ENCODE measurements at regions of chr18 and their contacts with region 1.

Region 1: DNA sequence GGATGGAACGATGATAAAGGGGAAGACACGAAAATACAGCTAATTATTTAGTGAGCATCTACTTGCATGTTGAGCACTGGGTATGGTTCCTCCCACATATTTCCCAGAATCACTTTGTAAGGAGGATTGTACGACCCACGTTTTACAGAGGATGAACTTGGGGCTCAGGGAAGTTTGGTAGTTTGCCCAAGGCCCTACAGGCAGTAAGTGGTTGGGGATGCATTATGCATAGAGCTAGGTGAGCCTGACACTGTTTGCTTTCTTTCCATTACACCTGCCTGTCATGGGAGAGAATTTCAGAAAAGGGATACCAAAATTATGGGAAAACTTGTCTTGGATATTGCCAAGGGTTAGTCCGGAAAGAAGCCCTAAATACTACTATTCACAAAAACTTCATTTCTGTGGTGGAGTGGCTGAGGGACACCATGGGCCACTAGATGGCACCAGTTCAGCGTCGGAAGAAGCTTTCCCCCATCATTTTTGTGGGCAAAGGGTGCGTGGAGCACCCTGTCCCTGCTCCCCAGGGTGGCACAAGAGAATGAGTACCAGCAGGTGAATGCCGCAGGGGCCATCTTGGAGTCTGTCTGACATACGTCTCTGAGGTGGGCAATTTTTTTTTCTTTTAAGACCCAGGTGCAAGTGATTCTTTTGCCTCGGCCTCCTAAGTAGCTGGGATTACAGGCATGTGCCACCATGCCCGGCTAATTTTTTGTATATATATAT is 23.5 kb upstream of the C18orf32 start:
- DNase-seq: no peak
- H3K4me3 ChIP-seq: no peak overlapping the region
- H3K27ac ChIP-seq: no peak overlapping the region
- H3K4me1 ChIP-seq: no peaks in the 10 kb centered on the region
- H3K27me3 ChIP-seq: peaks cover 33% of the 10 kb centered on the region
- CTCF ChIP-seq: peak; percentile 87

Region 2: GRCh38 chr18:49206717-49207116 is 303.8 kb before region 1 on chr18:
- intact Hi-C with region 1: no loop called
- DNase-seq: no peak
- H3K4me3 ChIP-seq: no peak overlapping the region
- H3K27ac ChIP-seq: no peak overlapping the region
- H3K4me1 ChIP-seq: peaks cover 11% of the 10 kb centered on the region
- H3K27me3 ChIP-seq: no peaks in the 10 kb centered on the region
- CTCF ChIP-seq: no peak

Region 3: GRCh38 chr18:49447810-49448745 is 62.5 kb before region 1 on chr18:
- intact Hi-C with region 1: no loop called
- DNase-seq: no peak
- H3K4me3 ChIP-seq: no peak overlapping the region
- H3K27ac ChIP-seq: no peak overlapping the region
- H3K4me1 ChIP-seq: no peaks in the 10 kb centered on the region
- H3K27me3 ChIP-seq: no peaks in the 10 kb centered on the region
- CTCF ChIP-seq: peak; percentile 68

Region 4: GRCh38 chr18:49668574-49669275 is 158.2 kb after region 1 on chr18:
- intact Hi-C with region 1: no loop called
- DNase-seq: peak; percentile 66
- H3K4me3 ChIP-seq: no peak overlapping the region
- H3K27ac ChIP-seq: peak overlapping the region; percentile 74
- H3K4me1 ChIP-seq: peaks cover 33% of the 10 kb centered on the region
- H3K27me3 ChIP-seq: peaks cover 86% of the 10 kb centered on the region
- CTCF ChIP-seq: no peak

Region 5: GRCh38 chr18:49768051-49768391 is 257.5 kb after region 1 on chr18:
- intact Hi-C with region 1: loop called (anchors 5 kb)
- DNase-seq: peak; percentile 33
- H3K4me3 ChIP-seq: no peak overlapping the region
- H3K27ac ChIP-seq: no peak overlapping the region
- H3K4me1 ChIP-seq: no peaks in the 10 kb centered on the region
- H3K27me3 ChIP-seq: no peaks in the 10 kb centered on the region
- CTCF ChIP-seq: peak; percentile 59

Measured in left ventricle myocardium inferior (tissue), 1 donor.